Breast epithelium (tissue), 4 donors: ENCODE measurements at regions of chr10 and their contacts with region 1.

Region 1: DNA sequence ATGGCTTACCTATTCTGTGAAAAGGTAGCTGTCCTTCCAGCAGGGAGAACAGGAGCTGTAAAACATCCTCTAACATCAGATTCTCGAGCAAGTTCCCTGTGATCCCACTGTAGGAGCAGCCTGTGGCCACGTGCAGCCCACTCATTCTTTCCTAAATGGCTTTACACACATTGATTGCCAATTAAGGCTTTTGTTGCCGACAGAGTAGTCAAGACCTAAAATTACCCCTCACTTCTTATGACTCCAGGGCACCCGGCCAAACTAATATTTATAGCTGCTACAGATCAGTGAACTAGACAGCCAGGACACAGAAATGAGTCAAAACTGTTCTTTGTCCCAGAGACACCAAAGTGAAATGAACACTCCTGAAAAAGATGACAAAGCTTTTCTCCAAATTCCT is 832.1 kb downstream of the SORCS3 start:
- DNase-seq: no peak
- H3K4me3 ChIP-seq: no peak overlapping the region
- H3K27ac ChIP-seq: no peak overlapping the region
- H3K4me1 ChIP-seq: no peaks in the 10 kb centered on the region
- H3K27me3 ChIP-seq: no peaks in the 10 kb centered on the region
- CTCF ChIP-seq: no peak
- POLR2A ChIP-seq: no peak

Region 2: DNA sequence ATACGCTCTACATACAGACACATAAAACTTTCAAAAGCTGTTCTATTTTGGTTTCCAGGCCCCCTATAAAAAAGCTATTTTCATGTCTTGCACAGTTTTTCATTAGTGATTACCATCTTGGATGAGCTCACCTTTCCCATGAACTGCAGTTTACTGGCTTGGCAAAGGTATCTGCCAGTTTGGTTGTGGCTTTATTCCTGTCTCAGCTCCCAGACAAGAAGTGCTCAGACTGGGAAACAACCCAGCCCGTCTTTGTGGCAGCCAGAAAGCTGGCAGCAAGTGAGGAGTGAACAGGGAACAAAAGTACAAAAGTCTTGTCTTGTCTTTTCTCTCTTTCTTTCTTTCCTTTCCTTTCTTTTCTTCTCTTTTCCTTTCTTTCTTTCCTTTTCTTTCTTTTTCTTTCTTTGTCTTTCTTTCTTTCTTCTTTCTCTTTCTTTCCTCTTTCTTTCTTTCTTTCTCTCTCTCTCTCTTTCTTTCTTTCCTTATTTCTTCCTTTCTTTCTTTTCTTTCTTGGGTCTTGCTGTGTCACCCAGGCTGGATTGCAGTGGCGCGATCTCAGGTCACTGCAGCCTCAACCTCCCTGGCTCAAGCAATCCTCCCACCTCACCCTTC is 980.7 kb before region 1 on chr10:
- intact Hi-C with region 1: no loop called
- DNase-seq: peak; percentile 67 to 83
- H3K4me3 ChIP-seq: no peak overlapping the region
- H3K27ac ChIP-seq: peak overlapping the region; percentile 25 to 45
- H3K4me1 ChIP-seq: no peaks in the 10 kb centered on the region
- H3K27me3 ChIP-seq: no peaks in the 10 kb centered on the region
- CTCF ChIP-seq: no peak
- POLR2A ChIP-seq: no peak

Region 3: DNA sequence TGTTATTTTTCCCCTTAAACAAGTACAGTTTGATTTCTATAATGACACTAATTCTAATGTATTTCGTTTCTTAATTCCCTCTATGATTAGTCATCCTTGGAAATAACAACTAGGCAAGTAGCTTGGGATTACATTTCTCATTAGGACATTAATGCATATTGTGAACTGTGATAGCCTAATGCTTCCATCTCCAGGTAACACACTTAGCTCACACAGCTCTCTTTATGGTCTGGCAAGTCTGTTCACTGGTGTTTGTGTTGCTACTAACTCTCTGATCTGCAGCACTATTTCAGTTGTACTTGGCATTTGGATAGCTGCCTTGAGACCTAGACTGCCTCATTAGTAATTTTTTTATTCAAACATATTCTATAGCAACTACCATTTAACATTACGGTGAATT is 21.1 kb after region 1 on chr10:
- intact Hi-C with region 1: loop called (anchors 2 kb)
- DNase-seq: no peak
- H3K4me3 ChIP-seq: no peak overlapping the region
- H3K27ac ChIP-seq: no peak overlapping the region
- H3K4me1 ChIP-seq: no peaks in the 10 kb centered on the region
- H3K27me3 ChIP-seq: no peaks in the 10 kb centered on the region
- CTCF ChIP-seq: no peak
- POLR2A ChIP-seq: no peak

Region 4: DNA sequence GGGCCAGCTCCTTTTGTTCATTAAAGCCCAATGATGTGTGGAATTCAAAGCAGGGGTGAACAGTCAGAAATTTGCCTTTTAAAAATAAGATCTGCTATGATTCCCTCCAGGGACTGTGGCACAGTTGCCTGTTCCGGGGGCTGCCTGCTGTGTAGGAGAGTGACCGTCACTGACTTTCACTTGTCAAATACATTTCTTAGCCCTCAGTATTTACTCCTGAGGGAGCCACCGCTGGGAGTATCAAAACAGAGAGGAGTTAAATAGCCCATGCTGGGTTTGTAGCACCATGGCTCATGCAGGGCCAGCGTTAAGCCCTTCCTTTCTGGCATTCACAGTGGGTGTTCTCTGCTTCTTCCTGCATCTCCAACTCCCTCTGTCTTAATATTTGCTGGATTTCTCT is 65.7 kb after region 1 on chr10:
- intact Hi-C with region 1: no loop called
- DNase-seq: no peak
- H3K4me3 ChIP-seq: no peak overlapping the region
- H3K27ac ChIP-seq: no peak overlapping the region
- H3K4me1 ChIP-seq: no peaks in the 10 kb centered on the region
- H3K27me3 ChIP-seq: no peaks in the 10 kb centered on the region
- CTCF ChIP-seq: no peak
- POLR2A ChIP-seq: no peak